Heart right ventricle (tissue), 16 donors: ENCODE measurements at regions of chr20 and their contacts with region 1.

Region 1: GRCh38 chr20:24160563-24161375 is 172.2 kb upstream of the GGTLC1 start:
- DNase-seq: peak; percentile 22 to 38
- ATAC-seq: peak in 5 of 8 donors; percentile 53 to 76 (median 67)
- H3K4me3 ChIP-seq: no peak overlapping the region
- H3K27ac ChIP-seq: no peak overlapping the region
- H3K4me1 ChIP-seq: no peaks in the 10 kb centered on the region
- H3K27me3 ChIP-seq: peaks cover 0 to 6% (median 0%) of the 10 kb centered on the region in 7 donors
- CTCF ChIP-seq: peak; percentile 40 to 78 (median 72)

Region 2: GRCh38 chr20:23937303-23938117 is 223.3 kb before region 1 on chr20:
- intact Hi-C with region 1: loop called in 1 of 10 experiments (anchors 5 kb)
- DNase-seq: peak; percentile 20 to 45
- ATAC-seq: peak; percentile 88 to 97 (median 91)
- H3K4me3 ChIP-seq: no peak overlapping the region
- H3K27ac ChIP-seq: no peak overlapping the region
- H3K4me1 ChIP-seq: no peaks in the 10 kb centered on the region
- H3K27me3 ChIP-seq: peaks cover 0 to 20% (median 0%) of the 10 kb centered on the region in 7 donors
- CTCF ChIP-seq: peak; percentile 60 to 84 (median 78)

Region 3: GRCh38 chr20:24194137-24194536 is 33.4 kb after region 1 on chr20:
- intact Hi-C with region 1: no loop called
- DNase-seq: no peak
- ATAC-seq: no peak
- H3K4me3 ChIP-seq: no peak overlapping the region
- H3K27ac ChIP-seq: no peak overlapping the region
- H3K4me1 ChIP-seq: no peaks in the 10 kb centered on the region
- H3K27me3 ChIP-seq: peaks cover 0 to 4% (median 0%) of the 10 kb centered on the region in 7 donors
- CTCF ChIP-seq: no peak

Region 4: GRCh38 chr20:24773751-24774201 is 613.0 kb after region 1 on chr20:
- intact Hi-C with region 1: loop called in 1 of 10 experiments (anchors 10 kb)
- DNase-seq: no peak
- ATAC-seq: no peak
- H3K4me3 ChIP-seq: no peak overlapping the region
- H3K27ac ChIP-seq: no peak overlapping the region
- H3K4me1 ChIP-seq: peaks cover 0 to 4% (median 0%) of the 10 kb centered on the region in 9 donors
- H3K27me3 ChIP-seq: peaks cover 0 to 27% (median 6%) of the 10 kb centered on the region in 7 donors
- CTCF ChIP-seq: no peak

Region 5: GRCh38 chr20:24910461-24910860 is 749.7 kb after region 1 on chr20:
- intact Hi-C with region 1: loop called in 6 of 10 experiments (anchors 5 to 10 kb)
- DNase-seq: no peak
- ATAC-seq: no peak
- H3K4me3 ChIP-seq: no peak overlapping the region
- H3K27ac ChIP-seq: no peak overlapping the region
- H3K4me1 ChIP-seq: no peaks in the 10 kb centered on the region
- H3K27me3 ChIP-seq: peaks cover 0 to 11% (median 0%) of the 10 kb centered on the region in 7 donors
- CTCF ChIP-seq: no peak